ENCODE measurements at regions of chr11 and their contacts with region 1.

Region 1: DNA sequence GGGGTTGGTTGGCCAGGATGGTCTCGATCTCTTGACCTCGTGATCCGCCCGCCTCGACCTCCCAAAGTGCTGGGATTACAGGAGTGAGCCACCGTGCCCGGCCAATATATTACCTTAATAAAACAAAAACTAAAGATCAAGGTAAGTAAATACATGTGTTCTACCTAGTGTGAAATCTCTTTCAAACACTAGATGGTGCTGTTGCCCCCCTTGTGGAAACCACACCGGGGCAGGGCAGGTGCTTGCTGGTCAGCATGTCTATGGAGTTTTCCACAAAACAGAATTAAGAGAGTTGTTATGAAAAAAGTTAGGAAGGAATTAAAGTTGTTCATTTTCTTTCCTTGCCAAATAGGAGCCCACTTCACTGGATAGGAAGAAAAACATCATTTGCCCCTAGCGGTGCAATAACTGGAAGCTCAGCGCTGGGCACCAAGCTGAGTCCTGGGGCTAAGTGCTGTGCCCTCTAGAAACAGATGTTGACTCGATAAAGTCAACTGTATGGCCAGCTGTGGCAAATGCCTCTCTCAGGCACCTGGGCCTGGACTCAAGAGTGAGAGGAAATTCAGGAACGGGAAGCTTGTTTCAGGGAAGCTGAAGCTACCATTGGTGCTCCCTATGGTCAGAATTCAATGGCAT is 6.3 kb upstream of the KCNJ5 start:
- DNase-seq: no peak
- H3K4me3 ChIP-seq: no peak overlapping the region
- H3K27ac ChIP-seq: no peak overlapping the region
- H3K4me1 ChIP-seq: no peaks in the 10 kb centered on the region
- H3K27me3 ChIP-seq: no peaks in the 10 kb centered on the region
- CTCF ChIP-seq: peak; percentile 67 to 84 (median 81)
- POLR2A ChIP-seq: no peak

Region 2: DNA sequence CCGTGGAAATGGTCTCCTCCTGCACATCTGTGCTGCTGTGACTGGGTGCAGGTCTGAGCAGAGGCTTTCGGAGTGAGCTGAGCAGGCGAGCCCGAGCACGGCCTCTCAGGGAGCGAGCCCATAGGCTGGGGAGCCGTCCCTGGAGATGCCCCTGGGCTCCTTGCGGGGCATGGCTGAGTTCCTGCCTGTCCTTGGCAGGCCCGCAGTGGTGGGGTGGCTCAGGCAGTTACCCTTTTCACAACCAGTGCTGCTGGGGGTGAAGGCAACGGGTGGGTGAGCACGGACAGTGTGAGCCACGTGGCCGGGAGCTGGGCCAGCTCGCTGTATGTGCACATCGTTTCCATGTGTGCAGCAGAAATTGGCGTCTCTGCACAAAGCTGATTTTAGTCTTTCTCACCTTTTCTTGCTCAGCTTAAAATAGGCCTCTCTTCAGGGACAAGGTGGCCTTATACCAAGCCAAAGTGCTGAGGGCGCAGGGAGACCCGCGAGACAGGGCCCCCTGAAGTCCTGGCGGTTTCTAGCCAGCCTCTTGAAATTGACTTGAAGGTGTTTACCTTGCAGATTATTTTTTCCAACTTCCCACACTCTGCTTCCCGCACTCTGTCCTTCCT is 58.1 kb after region 1 on chr11 and contains the start of gene TP53AIP1:
- intact Hi-C with region 1: no loop called
- DNase-seq: no peak
- H3K4me3 ChIP-seq: peak within 1 kb of the TSS in 1 of 2 donors; percentile 24
- H3K27ac ChIP-seq: peak within 1 kb of the TSS; percentile 29
- H3K4me1 ChIP-seq: peaks cover 5% of the 10 kb centered on the region
- H3K27me3 ChIP-seq: no peaks in the 10 kb centered on the region
- CTCF ChIP-seq: no peak
- POLR2A ChIP-seq: no peak
- total RNA-seq, gene TP53AIP1: 3.7 TPM

Region 3: DNA sequence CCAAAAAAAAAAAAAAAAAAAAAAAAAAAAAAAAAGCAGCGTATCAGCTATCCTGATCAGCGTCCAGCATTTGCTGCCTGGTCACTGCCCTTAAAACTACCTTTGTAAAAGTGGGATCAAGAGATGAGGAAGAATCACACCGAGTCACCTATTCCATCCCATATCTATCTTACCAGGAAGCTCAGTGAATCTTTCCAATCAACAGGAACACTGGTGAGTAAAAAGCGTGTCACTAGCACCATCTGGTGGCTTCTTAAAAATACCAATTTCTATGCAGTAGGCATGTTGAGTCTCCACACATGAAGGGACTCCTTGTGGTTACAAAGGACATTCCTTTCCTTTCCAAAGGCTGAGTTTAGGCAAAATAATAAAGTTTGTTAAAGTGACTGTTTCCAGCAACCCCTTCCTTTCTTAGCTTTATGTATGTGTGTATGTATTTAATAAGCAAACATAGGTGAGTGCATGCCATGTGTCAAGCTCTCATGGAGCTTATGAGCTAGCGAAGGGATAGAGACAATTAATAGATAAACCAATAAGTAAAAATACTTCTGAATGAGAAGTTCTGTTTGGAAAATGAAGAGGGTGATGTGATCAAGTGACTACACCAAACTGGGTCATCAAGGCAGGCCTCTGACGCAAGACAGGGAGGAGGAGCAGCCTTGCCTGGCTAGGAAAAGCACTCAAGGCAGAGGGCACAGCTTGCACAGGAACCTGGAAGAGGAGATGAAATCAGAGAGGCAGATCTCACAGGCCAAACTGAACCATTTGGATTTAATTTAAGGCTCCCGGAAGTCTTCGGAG is 71.8 kb after region 1 on chr11:
- intact Hi-C with region 1: loop called (anchors 10 kb)
- DNase-seq: no peak
- H3K4me3 ChIP-seq: no peak overlapping the region
- H3K27ac ChIP-seq: no peak overlapping the region
- H3K4me1 ChIP-seq: no peaks in the 10 kb centered on the region
- H3K27me3 ChIP-seq: no peaks in the 10 kb centered on the region
- CTCF ChIP-seq: peak; percentile 44 to 70 (median 68)
- POLR2A ChIP-seq: no peak

Measured in vagina (tissue), 2 donors.